Sigmoid colon (tissue), 7 donors: ENCODE measurements at regions of chr3 and their contacts with region 1.

Region 1: DNA sequence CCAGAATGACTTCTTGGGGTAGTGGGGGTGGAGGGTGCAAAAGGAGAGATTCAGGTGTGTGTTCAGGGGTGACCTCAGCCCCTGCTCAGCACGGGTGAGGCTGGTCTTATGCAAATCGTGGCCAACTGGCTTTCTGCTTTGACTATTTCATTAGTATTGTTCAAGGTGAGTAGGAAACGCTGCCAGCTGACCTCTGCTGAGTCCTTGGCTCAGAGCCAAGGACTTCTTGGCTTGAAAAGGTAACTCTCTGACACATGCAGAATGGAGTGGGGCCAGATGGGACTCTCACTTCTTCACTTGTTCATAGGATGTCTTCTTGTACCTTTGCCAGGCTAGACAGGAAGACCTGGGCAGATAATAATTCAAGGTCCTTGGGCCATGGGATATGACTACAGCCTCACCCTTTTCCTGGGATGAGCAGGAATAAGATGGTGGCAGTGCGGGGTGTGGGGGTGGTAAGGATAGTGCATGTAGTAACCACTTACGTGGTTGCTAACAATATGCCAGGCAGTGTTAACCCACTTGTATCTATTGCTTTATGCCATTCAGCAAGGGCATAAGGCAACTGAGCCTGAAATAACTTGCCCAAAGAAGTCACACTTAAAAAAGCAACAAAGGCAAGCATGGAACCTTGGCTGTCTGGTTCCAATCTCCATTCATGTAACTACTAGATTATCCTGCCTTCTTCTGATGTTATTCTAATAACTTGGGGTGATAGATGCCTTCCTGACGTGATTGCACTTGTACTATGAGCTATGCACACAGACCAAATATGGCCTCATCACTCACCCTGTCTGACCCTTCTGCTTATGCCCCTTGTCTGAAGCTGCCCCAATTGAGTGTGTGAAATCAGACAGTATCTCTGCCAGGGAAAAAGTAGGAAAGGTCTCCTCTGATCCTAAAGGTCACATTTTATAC is 193.1 kb downstream of the NR1D2 start:
- DNase-seq: no peak
- H3K4me3 ChIP-seq: no peak overlapping the region
- H3K27ac ChIP-seq: peak overlapping the region; percentile 56 to 79 (median 72)
- H3K4me1 ChIP-seq: peaks cover 0 to 78% (median 58%) of the 10 kb centered on the region in 4 donors
- H3K27me3 ChIP-seq: no peaks in the 10 kb centered on the region
- CTCF ChIP-seq: no peak
- EP300 ChIP-seq: no peak
- POLR2A ChIP-seq: no peak

Region 2: DNA sequence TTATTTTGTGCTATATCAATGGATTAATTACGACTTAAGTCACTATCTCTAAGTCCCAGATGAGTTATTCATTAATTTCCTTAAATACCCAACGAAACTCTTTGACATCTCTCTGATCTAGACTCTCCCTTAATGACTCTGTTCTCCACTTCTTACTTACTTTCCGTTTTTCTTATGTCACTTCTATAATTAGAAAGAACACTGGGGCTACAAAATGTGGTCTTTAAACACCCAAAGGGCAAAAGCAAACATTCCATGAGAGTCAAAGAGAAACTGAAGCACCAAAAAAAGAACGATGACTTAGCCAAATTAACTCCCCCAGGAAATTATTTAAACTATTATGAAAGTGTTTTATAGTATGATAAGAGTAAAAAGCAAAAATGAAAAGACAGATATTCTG is 1101.5 kb before region 1 on chr3:
- intact Hi-C with region 1: no loop called
- DNase-seq: no peak
- H3K4me3 ChIP-seq: no peak overlapping the region
- H3K27ac ChIP-seq: no peak overlapping the region
- H3K4me1 ChIP-seq: peaks cover 0 to 13% (median under 1%) of the 10 kb centered on the region in 4 donors
- H3K27me3 ChIP-seq: no peaks in the 10 kb centered on the region
- CTCF ChIP-seq: no peak
- EP300 ChIP-seq: no peak
- POLR2A ChIP-seq: no peak

Region 3: DNA sequence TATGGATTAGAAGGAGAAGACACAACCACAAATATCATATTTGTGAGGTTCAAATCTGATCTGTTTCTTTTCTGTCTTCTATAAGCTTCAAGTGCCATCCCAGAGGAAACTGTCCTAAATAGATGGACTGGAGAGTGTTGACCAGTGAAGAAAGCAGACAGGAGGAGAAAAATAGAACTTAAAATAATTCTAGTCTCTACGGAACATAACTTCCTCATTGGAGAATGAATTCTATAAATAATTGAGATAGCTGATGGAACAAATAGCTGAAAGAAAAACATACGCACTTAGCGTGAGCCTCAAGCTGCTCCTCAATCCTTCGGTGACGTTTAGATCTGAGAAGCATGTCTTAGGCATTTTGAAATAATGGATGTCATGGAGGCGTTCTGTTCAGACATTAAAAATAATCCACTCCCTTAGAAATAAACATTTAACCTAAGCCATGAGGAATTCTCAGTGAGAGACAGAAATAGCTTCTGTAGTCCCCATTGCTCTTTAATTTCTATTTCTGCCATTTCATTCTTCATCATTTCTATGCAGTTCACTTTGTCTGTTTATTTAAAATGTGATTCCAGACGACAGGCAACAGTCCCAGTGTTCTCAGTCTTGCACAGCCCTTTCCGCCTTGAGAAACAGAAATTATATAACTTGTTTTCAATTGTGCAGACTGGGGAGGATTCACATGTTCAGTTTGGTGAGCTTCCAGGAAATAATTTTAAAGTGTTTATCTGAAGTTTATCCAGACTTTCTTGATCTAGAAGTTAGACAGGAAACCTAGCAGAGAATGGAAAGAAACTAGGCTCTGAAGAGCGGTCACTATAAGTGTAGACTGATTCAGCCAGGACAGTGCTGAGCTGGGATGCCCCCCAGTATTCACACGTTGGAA is 95.8 kb before region 1 on chr3:
- intact Hi-C with region 1: loop called (anchors 5 kb)
- DNase-seq: peak; percentile 77
- H3K4me3 ChIP-seq: peak overlapping the region in 2 of 4 donors; percentile 14 to 17
- H3K27ac ChIP-seq: peak overlapping the region; percentile 77 to 85 (median 80)
- H3K4me1 ChIP-seq: peaks cover 0 to 67% (median 48%) of the 10 kb centered on the region in 4 donors
- H3K27me3 ChIP-seq: no peaks in the 10 kb centered on the region
- CTCF ChIP-seq: no peak
- EP300 ChIP-seq: peak in 3 of 4 donors; percentile 6 to 38 (median 17)
- POLR2A ChIP-seq: no peak

Region 4: GRCh38 chr3:24220859-24221657 is 82.8 kb after region 1 on chr3:
- intact Hi-C with region 1: loop called (anchors 5 kb)
- DNase-seq: peak; percentile 82
- H3K4me3 ChIP-seq: no peak overlapping the region
- H3K27ac ChIP-seq: peak overlapping the region; percentile 69 to 82 (median 78)
- H3K4me1 ChIP-seq: peaks cover 0 to 67% (median 50%) of the 10 kb centered on the region in 4 donors
- H3K27me3 ChIP-seq: no peaks in the 10 kb centered on the region
- CTCF ChIP-seq: no peak
- EP300 ChIP-seq: no peak
- POLR2A ChIP-seq: no peak